ENCODE measurements at regions of chr3 and their contacts with region 1.

Region 1: DNA sequence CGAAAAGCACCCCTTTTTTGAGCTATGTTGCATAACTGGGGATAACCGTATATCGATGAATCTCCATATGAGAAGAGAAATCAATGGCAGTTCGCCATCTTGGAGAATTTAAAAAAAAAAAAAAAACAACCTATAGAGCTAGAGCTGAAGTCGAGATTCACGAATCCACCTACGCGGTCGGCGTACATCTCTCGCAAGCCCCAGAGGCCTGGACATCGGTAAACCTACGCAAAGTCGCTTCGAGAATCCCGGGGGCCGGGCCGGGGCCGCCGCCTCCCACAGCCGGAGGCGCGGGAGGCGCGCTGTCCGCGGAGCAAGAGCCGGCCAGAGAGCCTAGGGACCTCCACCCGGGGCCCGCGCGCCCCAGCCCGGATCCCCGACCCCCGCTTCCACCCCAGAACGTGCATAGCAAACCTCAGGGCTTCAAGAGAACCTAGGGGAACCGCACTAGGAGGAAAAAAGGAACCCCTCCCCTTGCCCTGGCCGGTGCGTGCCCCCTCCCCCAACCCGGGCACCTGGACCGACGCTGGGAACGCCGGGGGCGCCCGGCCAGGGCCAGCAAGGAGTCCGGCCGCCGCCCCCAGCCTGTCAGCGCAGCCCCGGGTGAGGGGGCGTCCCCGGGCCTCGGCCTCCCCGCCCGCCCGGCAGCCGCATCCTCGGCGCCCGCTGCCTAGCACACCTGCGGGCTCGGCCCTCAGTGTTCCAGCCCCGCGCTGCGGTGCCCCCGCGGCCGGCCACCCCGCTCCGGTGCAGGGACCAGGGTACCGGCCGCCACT is 567 bp downstream of the PFN2 start:
- DNase-seq: peak; percentile 89
- ATAC-seq: peak; percentile 74
- H3K4me3 Mint-ChIP-seq: peak overlapping the region; percentile 84
- H3K27ac Mint-ChIP-seq: peak overlapping the region; percentile 59
- H3K4me1 Mint-ChIP-seq: peaks cover 16% of the 10 kb centered on the region
- H3K27me3 Mint-ChIP-seq: peaks cover 18% of the 10 kb centered on the region
- CTCF ChIP-seq: no peak

Region 2: DNA sequence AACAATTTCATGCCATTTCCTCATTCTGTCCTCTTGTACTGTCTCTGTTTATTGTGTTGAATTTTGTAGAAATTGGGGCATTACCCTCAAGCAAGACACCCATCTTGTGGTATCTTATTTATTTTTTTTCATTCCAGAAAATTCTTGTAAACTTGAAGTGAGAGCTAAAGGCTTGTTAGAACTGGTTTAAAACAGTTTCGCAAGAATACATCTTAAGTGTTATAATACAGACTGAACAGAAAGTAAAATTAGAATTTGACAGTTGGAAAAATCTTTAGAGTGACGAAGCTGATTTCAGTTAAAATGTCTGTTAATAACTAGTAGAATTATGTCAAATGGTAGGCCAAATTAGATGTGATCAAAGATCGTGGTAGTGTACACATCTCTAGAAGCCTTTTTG is 130.2 kb before region 1 on chr3:
- CTCF ChIA-PET with region 1: no interaction called
- POLR2A ChIA-PET with region 1: no interaction called
- intact Hi-C with region 1: no loop called
- DNase-seq: no peak
- ATAC-seq: no peak
- H3K4me3 Mint-ChIP-seq: no peak overlapping the region
- H3K27ac Mint-ChIP-seq: no peak overlapping the region
- H3K4me1 Mint-ChIP-seq: peaks cover 34% of the 10 kb centered on the region
- H3K27me3 Mint-ChIP-seq: no peaks in the 10 kb centered on the region
- CTCF ChIP-seq: no peak

Region 3: GRCh38 chr3:149902498-149903139 is 67.5 kb before region 1 on chr3:
- CTCF ChIA-PET with region 1: no interaction called
- POLR2A ChIA-PET with region 1: no interaction called
- intact Hi-C with region 1: no loop called
- DNase-seq: no peak
- ATAC-seq: no peak
- H3K4me3 Mint-ChIP-seq: no peak overlapping the region
- H3K27ac Mint-ChIP-seq: no peak overlapping the region
- H3K4me1 Mint-ChIP-seq: no peaks in the 10 kb centered on the region
- H3K27me3 Mint-ChIP-seq: no peaks in the 10 kb centered on the region
- CTCF ChIP-seq: peak; percentile 27

Region 4: GRCh38 chr3:149958171-149958796 is 11.8 kb before region 1 on chr3:
- CTCF ChIA-PET with region 1: interaction called, 11 read pairs
- POLR2A ChIA-PET with region 1: no interaction called
- intact Hi-C with region 1: no loop called
- DNase-seq: no peak
- ATAC-seq: no peak
- H3K4me3 Mint-ChIP-seq: no peak overlapping the region
- H3K27ac Mint-ChIP-seq: no peak overlapping the region
- H3K4me1 Mint-ChIP-seq: peaks cover 19% of the 10 kb centered on the region
- H3K27me3 Mint-ChIP-seq: no peaks in the 10 kb centered on the region
- CTCF ChIP-seq: no peak

Region 5: DNA sequence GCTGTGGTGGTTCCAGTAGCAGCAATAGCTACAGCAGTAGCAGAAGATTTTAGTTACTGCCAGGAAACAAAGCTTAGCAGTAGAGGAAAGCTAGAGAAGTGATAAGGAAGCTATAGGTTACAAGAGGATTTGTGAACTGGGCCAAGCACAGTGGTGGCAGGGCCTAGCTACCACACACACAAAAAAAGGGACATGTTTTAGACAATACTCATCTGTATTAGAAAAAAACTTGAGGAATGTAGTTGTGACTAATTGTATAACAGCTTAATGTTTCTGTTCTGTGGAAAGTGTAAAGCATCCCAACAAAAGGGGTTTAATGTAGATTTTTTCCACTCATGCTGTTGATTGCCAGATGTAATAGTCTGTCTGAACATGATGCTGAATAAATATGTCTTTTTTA is 30.5 kb after region 1 on chr3:
- CTCF ChIA-PET with region 1: no interaction called
- POLR2A ChIA-PET with region 1: no interaction called
- intact Hi-C with region 1: no loop called
- DNase-seq: no peak
- ATAC-seq: no peak
- H3K4me3 Mint-ChIP-seq: no peak overlapping the region
- H3K27ac Mint-ChIP-seq: no peak overlapping the region
- H3K4me1 Mint-ChIP-seq: no peaks in the 10 kb centered on the region
- H3K27me3 Mint-ChIP-seq: peaks cover 8% of the 10 kb centered on the region
- CTCF ChIP-seq: no peak

Region 6: GRCh38 chr3:150183678-150184425 is 213.7 kb after region 1 on chr3:
- CTCF ChIA-PET with region 1: interaction called, 56 read pairs
- POLR2A ChIA-PET with region 1: interaction called, 3 read pairs
- intact Hi-C with region 1: loop called (anchors 5 kb)
- DNase-seq: peak; percentile 63
- ATAC-seq: peak; percentile 88
- H3K4me3 Mint-ChIP-seq: no peak overlapping the region
- H3K27ac Mint-ChIP-seq: no peak overlapping the region
- H3K4me1 Mint-ChIP-seq: no peaks in the 10 kb centered on the region
- H3K27me3 Mint-ChIP-seq: peaks cover 3% of the 10 kb centered on the region
- CTCF ChIP-seq: peak; percentile 62

Region 7: DNA sequence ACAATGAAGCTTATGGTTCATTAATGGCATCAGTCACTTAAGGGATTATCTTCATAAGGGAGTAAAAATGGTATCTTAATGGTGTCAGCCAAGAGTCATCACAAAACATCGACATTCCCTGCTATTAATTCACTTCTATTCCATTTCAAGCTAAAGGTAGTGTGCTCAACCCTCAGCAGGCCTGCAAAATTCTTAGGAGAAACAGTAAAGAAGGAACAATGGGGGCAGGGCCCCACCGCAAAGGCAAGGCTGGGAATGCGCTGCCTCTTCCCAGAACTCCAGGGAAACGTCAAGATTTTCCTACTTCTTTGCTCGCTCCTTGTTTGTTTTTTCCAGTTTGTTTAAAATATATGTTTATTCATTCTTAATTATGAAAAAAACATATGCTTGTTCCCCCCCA is 250.7 kb after region 1 on chr3:
- CTCF ChIA-PET with region 1: interaction called, 23 read pairs
- POLR2A ChIA-PET with region 1: no interaction called
- intact Hi-C with region 1: loop called (anchors 2 kb)
- DNase-seq: no peak
- ATAC-seq: no peak
- H3K4me3 Mint-ChIP-seq: no peak overlapping the region
- H3K27ac Mint-ChIP-seq: no peak overlapping the region
- H3K4me1 Mint-ChIP-seq: peaks cover 2% of the 10 kb centered on the region
- H3K27me3 Mint-ChIP-seq: peaks cover 29% of the 10 kb centered on the region
- CTCF ChIP-seq: no peak